Activated CD4-positive, alpha-beta memory T cell treated with anti-CD3 and anti-CD28 coated beads for 36 hours (primary cell): ENCODE measurements at regions of chr16 and their contacts with region 1.

Region 1: GRCh38 chr16:84726079-84726668 is 26.4 kb downstream of the USP10 start:
- DNase-seq: peak; percentile 86
- H3K4me3 Mint-ChIP-seq: no peak overlapping the region
- H3K27ac Mint-ChIP-seq: no peak overlapping the region
- H3K4me1 Mint-ChIP-seq: peaks cover 64% of the 10 kb centered on the region
- H3K27me3 Mint-ChIP-seq: no peaks in the 10 kb centered on the region

Region 2: DNA sequence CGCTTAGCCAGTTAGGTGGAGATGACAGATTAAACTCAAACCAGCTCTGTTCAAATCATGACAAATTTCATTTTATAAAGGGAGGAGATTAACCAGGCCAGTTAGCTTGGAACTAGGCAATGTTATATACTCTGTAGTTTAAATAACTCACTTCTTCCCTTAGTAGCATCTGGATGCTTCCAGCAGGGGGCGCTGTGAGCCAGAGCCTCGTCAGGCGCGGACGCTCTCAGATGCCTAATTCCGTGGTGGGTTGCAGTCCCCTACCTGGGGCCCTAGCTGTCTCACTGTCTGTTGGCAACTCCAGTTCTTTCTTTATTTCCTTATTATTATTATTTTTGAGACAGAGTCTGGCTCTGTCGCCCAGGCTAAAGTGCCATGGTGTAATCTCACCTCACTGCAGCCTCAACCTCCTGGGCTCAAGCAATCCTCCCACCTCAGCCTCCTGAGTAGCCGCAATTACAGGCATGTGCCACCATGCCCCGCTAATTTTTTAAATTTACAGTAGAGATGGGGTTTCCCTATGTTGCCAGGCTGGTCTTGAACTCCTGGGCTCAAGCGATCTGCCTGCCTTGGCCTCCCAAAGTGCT is 448.8 kb before region 1 on chr16:
- CTCF ChIA-PET with region 1: interaction called, 4 read pairs
- POLR2A ChIA-PET with region 1: no interaction called
- intact Hi-C with region 1: loop called (anchors 5 kb)
- DNase-seq: peak; percentile 77
- H3K4me3 Mint-ChIP-seq: no peak overlapping the region
- H3K27ac Mint-ChIP-seq: no peak overlapping the region
- H3K4me1 Mint-ChIP-seq: no peaks in the 10 kb centered on the region
- H3K27me3 Mint-ChIP-seq: peaks cover 8% of the 10 kb centered on the region

Region 3: DNA sequence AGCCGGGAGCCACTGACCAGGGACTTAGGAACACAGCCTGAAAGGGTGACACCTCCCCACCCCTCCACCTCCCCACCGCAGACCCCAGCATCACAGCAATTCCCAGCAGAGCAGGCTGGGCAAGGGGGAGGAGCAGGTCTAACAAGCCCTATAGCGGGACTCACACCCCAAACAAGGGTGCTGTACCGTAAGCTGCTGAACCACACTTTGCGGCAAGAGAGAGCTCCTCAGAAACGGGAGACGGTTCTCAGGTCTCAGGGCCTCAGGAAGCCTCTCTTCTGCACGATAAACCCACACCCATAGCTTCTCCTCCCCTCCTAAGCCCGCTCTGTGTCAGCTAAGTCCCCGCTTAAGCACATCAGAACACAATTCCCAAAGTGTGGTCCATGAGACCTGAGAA is 96.6 kb before region 1 on chr16:
- CTCF ChIA-PET with region 1: interaction called, 12 read pairs
- POLR2A ChIA-PET with region 1: no interaction called
- intact Hi-C with region 1: no loop called
- DNase-seq: no peak
- H3K4me3 Mint-ChIP-seq: no peak overlapping the region
- H3K27ac Mint-ChIP-seq: no peak overlapping the region
- H3K4me1 Mint-ChIP-seq: peaks cover 20% of the 10 kb centered on the region
- H3K27me3 Mint-ChIP-seq: no peaks in the 10 kb centered on the region

Region 4: GRCh38 chr16:84672276-84673202 is 53.6 kb before region 1 on chr16:
- CTCF ChIA-PET with region 1: interaction called, 93 read pairs
- POLR2A ChIA-PET with region 1: no interaction called
- intact Hi-C with region 1: loop called (anchors 1 kb)
- DNase-seq: peak; percentile 88
- H3K4me3 Mint-ChIP-seq: no peak overlapping the region
- H3K27ac Mint-ChIP-seq: no peak overlapping the region
- H3K4me1 Mint-ChIP-seq: peaks cover 1% of the 10 kb centered on the region
- H3K27me3 Mint-ChIP-seq: no peaks in the 10 kb centered on the region

Region 5: DNA sequence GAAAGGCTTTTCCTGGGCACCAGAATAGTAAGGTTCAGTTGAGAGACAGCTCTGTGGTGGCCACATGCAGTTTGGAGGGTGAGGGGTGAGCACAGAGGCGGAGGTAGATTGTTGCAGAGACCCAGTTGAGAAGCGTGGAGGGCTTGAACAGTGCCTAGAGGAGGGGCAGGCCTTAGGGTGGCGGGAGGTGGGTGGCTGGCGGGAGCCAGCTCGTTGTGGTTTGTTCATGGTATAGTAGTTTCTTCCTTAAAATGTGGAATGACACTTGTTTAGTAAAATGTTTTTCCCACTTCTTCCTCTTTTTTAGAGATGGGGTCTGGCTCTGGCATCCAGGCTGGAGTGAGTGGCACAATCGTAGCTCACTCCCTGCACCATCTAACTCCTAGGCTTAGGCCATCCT is 12.1 kb before region 1 on chr16:
- CTCF ChIA-PET with region 1: interaction called, 16 read pairs
- POLR2A ChIA-PET with region 1: no interaction called
- intact Hi-C with region 1: no loop called
- DNase-seq: no peak
- H3K4me3 Mint-ChIP-seq: no peak overlapping the region
- H3K27ac Mint-ChIP-seq: no peak overlapping the region
- H3K4me1 Mint-ChIP-seq: peaks cover 71% of the 10 kb centered on the region
- H3K27me3 Mint-ChIP-seq: no peaks in the 10 kb centered on the region

Region 6: DNA sequence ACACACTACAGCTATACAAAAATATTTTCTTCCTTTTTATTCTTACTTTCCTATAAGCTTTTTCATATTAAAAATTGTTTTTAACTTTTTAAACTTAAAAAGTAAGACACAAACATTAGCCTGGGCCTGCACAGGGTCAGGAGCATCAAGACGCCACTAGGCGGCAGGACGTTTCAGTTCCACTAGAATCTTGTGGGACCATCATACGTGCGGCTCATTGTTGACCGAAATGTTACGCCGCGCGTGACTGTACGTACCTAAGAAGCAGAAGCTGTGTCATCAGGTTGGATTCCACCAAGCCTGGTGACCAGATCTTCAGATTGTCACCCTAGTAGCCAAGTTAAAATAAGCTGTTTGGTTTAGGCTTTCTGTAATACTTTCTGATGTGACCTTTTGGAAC is 20.7 kb after region 1 on chr16:
- CTCF ChIA-PET with region 1: interaction called, 187 read pairs
- POLR2A ChIA-PET with region 1: interaction called, 3 read pairs
- intact Hi-C with region 1: no loop called
- DNase-seq: no peak
- H3K4me3 Mint-ChIP-seq: no peak overlapping the region
- H3K27ac Mint-ChIP-seq: no peak overlapping the region
- H3K4me1 Mint-ChIP-seq: peaks cover 28% of the 10 kb centered on the region
- H3K27me3 Mint-ChIP-seq: no peaks in the 10 kb centered on the region